SK-N-SH (cell line): ENCODE measurements at regions of chr3 and their contacts with region 1.

Region 1: GRCh38 chr3:163045945-163046344 is 1549.3 kb downstream of the OTOL1 start:
- DNase-seq: no peak
- H3K4me3 ChIP-seq: no peak overlapping the region
- H3K27ac ChIP-seq: no peak overlapping the region
- H3K4me1 ChIP-seq: no peaks in the 10 kb centered on the region
- H3K27me3 ChIP-seq: no peaks in the 10 kb centered on the region
- CTCF ChIP-seq: no peak
- EP300 ChIP-seq: no peak
- RAD21 ChIP-seq: no peak

Region 2: DNA sequence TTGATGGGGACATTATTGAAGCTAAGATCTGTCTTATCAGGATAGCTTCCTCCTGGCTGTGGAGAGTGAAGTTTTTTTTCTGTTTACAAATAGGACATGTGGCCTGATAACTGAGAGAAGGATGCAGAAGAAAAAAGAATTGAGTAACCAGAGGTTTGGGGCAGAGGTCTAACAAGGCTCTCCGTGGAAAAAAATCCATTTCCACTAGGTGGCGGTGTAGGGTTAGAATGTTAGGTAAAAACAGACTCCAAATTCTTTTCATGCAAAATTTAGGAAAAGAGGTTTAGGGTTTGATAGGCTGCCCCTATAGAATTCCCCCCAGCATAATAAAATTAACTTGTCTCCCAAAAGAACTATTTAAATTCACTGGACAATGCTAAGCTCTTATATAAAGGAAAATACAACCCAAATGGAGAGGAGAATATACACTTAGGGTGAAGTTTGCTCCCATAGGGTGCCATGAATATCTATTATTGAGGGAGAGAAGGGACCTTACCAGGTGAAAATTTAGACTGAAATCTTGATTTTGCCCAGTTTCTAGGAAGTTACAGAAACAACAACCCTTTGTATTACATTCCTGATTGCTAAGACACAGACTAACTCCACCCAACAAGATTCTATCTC is 11.0 kb after region 1 on chr3:
- CTCF ChIA-PET with region 1: interaction called, 16 read pairs
- POLR2A ChIA-PET with region 1: no interaction called
- DNase-seq: peak; percentile 47
- H3K4me3 ChIP-seq: no peak overlapping the region; a peak in 1 of 4 replicates
- H3K27ac ChIP-seq: no peak overlapping the region
- H3K4me1 ChIP-seq: no peaks in the 10 kb centered on the region
- H3K27me3 ChIP-seq: no peaks in the 10 kb centered on the region
- CTCF ChIP-seq: peak; percentile 79
- EP300 ChIP-seq: no peak
- RAD21 ChIP-seq: peak; percentile 73